CD8-positive, alpha-beta T cell (primary cell): ENCODE measurements at regions of chr10 and their contacts with region 1.

Region 1: GRCh38 chr10:68331455-68332258 is at the start of gene HNRNPH3:
- DNase-seq: peak; percentile 98 to 100 (median 99)
- ATAC-seq: peak; percentile 82
- H3K4me3 ChIP-seq: peak within 1 kb of the TSS; percentile 75 to 83
- H3K4me3 Mint-ChIP-seq: peak within 1 kb of the TSS; percentile 100
- H3K27ac ChIP-seq: peak within 1 kb of the TSS; percentile 86 to 99
- H3K27ac Mint-ChIP-seq: peak within 1 kb of the TSS; percentile 100
- H3K4me1 ChIP-seq: peaks cover 28% of the 10 kb centered on the region
- H3K4me1 Mint-ChIP-seq: peaks cover 44% of the 10 kb centered on the region
- H3K27me3 ChIP-seq: no peaks in the 10 kb centered on the region
- H3K27me3 Mint-ChIP-seq: no peaks in the 10 kb centered on the region
- CTCF ChIP-seq: no peak
- total RNA-seq, gene HNRNPH3: 242 to 255 TPM

Region 2: GRCh38 chr10:67884313-67884841 is 447.3 kb before region 1 on chr10 and contains the start of gene SIRT1:
- CTCF ChIA-PET with region 1: no interaction called
- POLR2A ChIA-PET with region 1: interaction called, 6 read pairs
- intact Hi-C with region 1: loop called (anchors 1 to 2 kb)
- DNase-seq: peak; percentile 84 to 97 (median 94)
- ATAC-seq: peak; percentile 72
- H3K4me3 ChIP-seq: peak within 1 kb of the TSS; percentile 69 to 70
- H3K4me3 Mint-ChIP-seq: peak within 1 kb of the TSS; percentile 89
- H3K27ac ChIP-seq: peak within 1 kb of the TSS; percentile 57 to 89
- H3K27ac Mint-ChIP-seq: peak within 1 kb of the TSS; percentile 94
- H3K4me1 ChIP-seq: peaks cover 23% of the 10 kb centered on the region
- H3K4me1 Mint-ChIP-seq: peaks cover 35% of the 10 kb centered on the region
- H3K27me3 ChIP-seq: no peaks in the 10 kb centered on the region
- H3K27me3 Mint-ChIP-seq: no peaks in the 10 kb centered on the region
- CTCF ChIP-seq: no peak
- total RNA-seq, gene SIRT1: 72.6 to 74.5 TPM

Region 3: DNA sequence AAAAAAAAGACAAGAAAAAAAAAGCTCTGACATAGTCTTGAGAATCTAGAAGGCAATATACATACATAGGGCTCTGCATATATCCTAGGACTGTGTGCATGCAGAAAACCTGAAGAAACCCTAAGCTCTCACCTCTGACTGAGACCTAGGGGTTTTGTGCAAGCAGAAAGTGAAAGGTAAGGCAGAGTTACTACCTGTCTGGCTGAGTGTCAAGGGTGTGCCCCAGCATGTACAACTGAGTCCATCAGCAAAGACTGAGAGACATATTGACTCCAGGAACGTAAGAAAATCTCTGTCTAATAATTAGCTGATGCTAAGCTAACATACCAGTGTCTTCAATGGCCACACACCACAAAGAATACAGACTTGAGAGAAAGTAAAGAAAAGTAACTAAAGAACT is 16.1 kb before region 1 on chr10:
- CTCF ChIA-PET with region 1: no interaction called
- POLR2A ChIA-PET with region 1: interaction called, 14 read pairs
- intact Hi-C with region 1: loop called in 1 of 2 experiments (anchors 2 kb)
- DNase-seq: no peak
- ATAC-seq: no peak
- H3K4me3 ChIP-seq: no peak overlapping the region
- H3K4me3 Mint-ChIP-seq: no peak overlapping the region
- H3K27ac ChIP-seq: no peak overlapping the region
- H3K27ac Mint-ChIP-seq: no peak overlapping the region
- H3K4me1 ChIP-seq: peaks cover 11% of the 10 kb centered on the region
- H3K4me1 Mint-ChIP-seq: peaks cover 10% of the 10 kb centered on the region
- H3K27me3 ChIP-seq: no peaks in the 10 kb centered on the region
- H3K27me3 Mint-ChIP-seq: no peaks in the 10 kb centered on the region
- CTCF ChIP-seq: no peak

Region 4: GRCh38 chr10:68406815-68407548 is 75.3 kb after region 1 on chr10 and contains the start of gene RUFY2:
- CTCF ChIA-PET with region 1: interaction called, 4 read pairs
- POLR2A ChIA-PET with region 1: interaction called, 6 read pairs
- intact Hi-C with region 1: loop called (anchors 2 kb)
- DNase-seq: peak; percentile 56 to 89 (median 76)
- ATAC-seq: peak; percentile 92
- H3K4me3 ChIP-seq: peak within 1 kb of the TSS; percentile 95 to 99
- H3K4me3 Mint-ChIP-seq: peak within 1 kb of the TSS; percentile 92
- H3K27ac ChIP-seq: peak within 1 kb of the TSS; percentile 69 to 78
- H3K27ac Mint-ChIP-seq: peak within 1 kb of the TSS; percentile 82
- H3K4me1 ChIP-seq: peaks cover 10% of the 10 kb centered on the region
- H3K4me1 Mint-ChIP-seq: peaks cover 19% of the 10 kb centered on the region
- H3K27me3 ChIP-seq: no peaks in the 10 kb centered on the region
- H3K27me3 Mint-ChIP-seq: no peaks in the 10 kb centered on the region
- CTCF ChIP-seq: peak; percentile 81
- total RNA-seq, gene RUFY2: 11.7 to 13.7 TPM

Region 5: DNA sequence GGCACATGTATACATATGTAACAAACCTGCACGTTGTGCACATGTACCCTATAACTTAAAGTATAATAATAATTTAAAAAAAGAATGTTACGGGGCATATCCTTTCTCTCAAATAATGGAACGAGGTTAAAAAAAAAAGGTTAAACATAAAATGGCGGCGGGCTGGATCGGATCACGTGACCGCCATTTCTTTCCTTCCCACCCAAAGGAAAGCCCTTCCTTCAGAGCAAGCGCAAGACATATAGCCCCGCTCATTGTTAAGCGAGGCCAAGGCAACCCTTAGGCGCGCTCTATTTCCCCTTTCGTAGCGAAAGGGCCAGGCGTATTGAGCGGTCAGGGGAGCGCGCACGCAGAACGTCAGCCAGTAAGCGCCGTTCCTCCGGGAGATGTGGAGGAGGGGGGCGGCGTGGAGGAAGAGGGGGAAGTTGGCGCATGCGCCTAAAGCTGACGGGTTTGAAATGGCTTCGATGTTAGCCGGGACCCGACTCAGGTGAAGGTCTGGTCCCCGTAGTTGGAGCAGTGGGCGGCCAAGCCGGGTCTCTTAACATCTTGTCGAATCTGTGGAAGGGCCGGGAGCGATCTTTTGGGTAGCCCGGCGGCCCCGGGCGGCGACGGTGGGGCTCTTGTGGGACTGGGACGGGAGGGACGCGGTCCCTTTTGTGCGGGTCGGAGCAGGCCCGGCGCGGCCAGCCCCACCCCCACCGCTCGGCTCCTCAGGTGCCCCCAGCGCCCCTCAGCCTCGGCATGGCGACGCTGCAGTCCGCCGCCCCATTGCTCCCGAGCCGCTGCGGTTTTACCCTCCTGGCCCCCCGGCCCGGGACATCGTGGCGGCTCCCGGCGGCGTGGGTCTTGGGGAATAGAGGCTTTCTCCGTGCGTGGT is 389.4 kb after region 1 on chr10 and contains the start of gene CCAR1:
- CTCF ChIA-PET with region 1: no interaction called
- POLR2A ChIA-PET with region 1: interaction called, 5 read pairs
- intact Hi-C with region 1: loop called in 1 of 2 experiments (anchors 5 kb)
- DNase-seq: peak; percentile 92 to 99 (median 97)
- ATAC-seq: peak; percentile 95
- H3K4me3 ChIP-seq: peak within 1 kb of the TSS; percentile 87 to 98
- H3K4me3 Mint-ChIP-seq: peak within 1 kb of the TSS; percentile 100
- H3K27ac ChIP-seq: peak within 1 kb of the TSS; percentile 83 to 95
- H3K27ac Mint-ChIP-seq: peak within 1 kb of the TSS; percentile 99
- H3K4me1 ChIP-seq: peaks cover 10% of the 10 kb centered on the region
- H3K4me1 Mint-ChIP-seq: peaks cover 20% of the 10 kb centered on the region
- H3K27me3 ChIP-seq: no peaks in the 10 kb centered on the region
- H3K27me3 Mint-ChIP-seq: no peaks in the 10 kb centered on the region
- CTCF ChIP-seq: no peak
- total RNA-seq, gene CCAR1: 70.8 to 79.1 TPM

Region 6: GRCh38 chr10:69318106-69318866 is 986.6 kb after region 1 on chr10:
- CTCF ChIA-PET with region 1: no interaction called
- POLR2A ChIA-PET with region 1: no interaction called
- intact Hi-C with region 1: loop called (anchors 5 to 10 kb)
- DNase-seq: peak; percentile 81 to 96 (median 90)
- ATAC-seq: peak; percentile 89
- H3K4me3 ChIP-seq: peak overlapping the region; percentile 92 to 99
- H3K4me3 Mint-ChIP-seq: peak overlapping the region; percentile 95
- H3K27ac ChIP-seq: peak overlapping the region; percentile 89 to 92
- H3K27ac Mint-ChIP-seq: peak overlapping the region; percentile 89
- H3K4me1 ChIP-seq: peaks cover 32% of the 10 kb centered on the region
- H3K4me1 Mint-ChIP-seq: peaks cover 38% of the 10 kb centered on the region
- H3K27me3 ChIP-seq: no peaks in the 10 kb centered on the region
- H3K27me3 Mint-ChIP-seq: no peaks in the 10 kb centered on the region
- CTCF ChIP-seq: no peak